CD4-positive, alpha-beta T cell (primary cell): ENCODE measurements at regions of chr1 and their contacts with region 1.

Region 1: GRCh38 chr1:156500797-156501499 is 373 bp upstream of the MEF2D start:
- DNase-seq: peak; percentile 90 to 97 (median 94)
- ATAC-seq: peak; percentile 63
- H3K4me3 ChIP-seq: peak overlapping the region; percentile 98
- H3K4me3 Mint-ChIP-seq: peak overlapping the region; percentile 97
- H3K27ac ChIP-seq: peak overlapping the region; percentile 96
- H3K27ac Mint-ChIP-seq: peak overlapping the region; percentile 97
- H3K4me1 ChIP-seq: peaks cover 84% of the 10 kb centered on the region
- H3K4me1 Mint-ChIP-seq: peaks cover 82% of the 10 kb centered on the region
- H3K27me3 ChIP-seq: no peaks in the 10 kb centered on the region
- H3K27me3 Mint-ChIP-seq: no peaks in the 10 kb centered on the region
- CTCF ChIP-seq: peak; percentile 74

Region 2: DNA sequence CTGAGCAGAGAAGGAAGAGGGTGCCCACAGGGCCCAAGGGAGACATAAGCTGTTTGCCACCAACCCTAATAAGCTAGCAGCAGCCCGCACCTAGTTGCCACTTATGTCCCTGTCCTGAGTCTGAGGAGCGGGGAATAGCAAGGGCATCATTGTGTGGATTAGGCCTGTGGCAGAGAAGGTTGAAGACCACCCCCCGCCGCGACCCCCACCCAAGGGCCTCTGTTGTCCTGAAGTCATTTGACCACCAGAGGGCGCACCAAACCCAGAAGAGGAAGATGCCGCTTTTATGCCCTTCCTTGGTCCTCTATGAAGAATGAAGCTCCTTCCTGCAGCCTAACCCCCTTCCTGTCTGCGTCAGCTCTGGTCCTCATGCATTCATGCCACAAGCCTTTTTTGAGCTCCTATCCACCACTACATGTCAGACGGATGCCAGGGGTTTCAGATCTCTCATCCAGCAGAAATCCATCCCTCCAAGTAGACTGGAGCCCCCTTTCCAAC is 115.4 kb before region 1 on chr1:
- CTCF ChIA-PET with region 1: interaction called, 7 read pairs
- POLR2A ChIA-PET with region 1: interaction called, 12 read pairs
- intact Hi-C with region 1: no loop called
- DNase-seq: peak; percentile 58 to 86 (median 74)
- ATAC-seq: peak; percentile 93
- H3K4me3 ChIP-seq: no peak overlapping the region
- H3K4me3 Mint-ChIP-seq: no peak overlapping the region
- H3K27ac ChIP-seq: no peak overlapping the region
- H3K27ac Mint-ChIP-seq: no peak overlapping the region
- H3K4me1 ChIP-seq: peaks cover 13% of the 10 kb centered on the region
- H3K4me1 Mint-ChIP-seq: peaks cover 12% of the 10 kb centered on the region
- H3K27me3 ChIP-seq: peaks cover 16 to 18% of the 10 kb centered on the region in 2 experiments
- H3K27me3 Mint-ChIP-seq: peaks cover 39% of the 10 kb centered on the region
- CTCF ChIP-seq: peak; percentile 90

Region 3: DNA sequence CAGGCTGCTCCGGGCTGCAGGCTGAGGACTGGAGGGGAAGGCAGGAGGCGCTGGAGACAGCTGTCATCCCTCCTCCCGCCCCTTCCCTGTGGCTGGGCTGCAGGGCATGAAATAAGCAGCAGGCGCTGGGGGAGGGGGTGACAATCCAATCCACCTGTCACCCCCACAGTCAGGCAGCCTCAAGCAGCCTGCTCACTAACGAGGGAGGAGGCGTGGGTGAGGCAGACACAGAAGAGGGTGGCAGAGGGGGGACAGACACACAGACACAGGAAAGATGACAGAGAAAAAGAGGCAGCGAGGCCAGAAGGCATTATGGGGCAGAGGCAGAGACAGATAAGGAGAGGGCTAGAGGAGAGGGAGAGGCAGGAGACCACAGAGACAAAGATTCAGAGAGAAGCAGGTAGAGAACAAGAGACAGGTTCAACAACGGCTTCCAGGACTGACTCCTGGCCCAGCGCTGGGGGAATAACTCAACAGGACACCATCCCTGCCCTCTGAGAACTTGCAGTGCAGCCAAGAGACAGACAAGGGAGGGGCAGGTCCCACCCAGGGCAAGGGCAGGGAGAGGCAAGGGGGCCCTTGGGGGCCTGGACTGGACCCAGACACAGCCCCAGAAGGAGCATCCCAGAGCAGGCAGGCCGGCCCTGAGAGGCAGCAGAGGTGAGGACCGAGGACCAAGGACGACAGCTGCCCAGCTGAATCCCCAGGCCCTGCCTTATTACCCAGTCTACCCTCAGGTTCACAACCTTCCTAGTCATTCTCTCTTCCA is 11.6 kb before region 1 on chr1:
- CTCF ChIA-PET with region 1: interaction called, 17 read pairs
- POLR2A ChIA-PET with region 1: interaction called, 145 read pairs
- intact Hi-C with region 1: no loop called
- DNase-seq: peak in 8 of 14 experiments; percentile 18 to 66 (median 50)
- ATAC-seq: peak; percentile 71
- H3K4me3 ChIP-seq: peak overlapping the region; percentile 11
- H3K4me3 Mint-ChIP-seq: peak overlapping the region; percentile 70
- H3K27ac ChIP-seq: peak overlapping the region; percentile 68 to 71
- H3K27ac Mint-ChIP-seq: peak overlapping the region; percentile 90
- H3K4me1 ChIP-seq: peaks cover 98% of the 10 kb centered on the region
- H3K4me1 Mint-ChIP-seq: peaks cover 90% of the 10 kb centered on the region
- H3K27me3 ChIP-seq: no peaks in the 10 kb centered on the region
- H3K27me3 Mint-ChIP-seq: no peaks in the 10 kb centered on the region
- CTCF ChIP-seq: no peak

Region 4: GRCh38 chr1:156571949-156572662 is 71.2 kb after region 1 on chr1 and contains the start of gene IQGAP3:
- CTCF ChIA-PET with region 1: no interaction called
- POLR2A ChIA-PET with region 1: interaction called, 15 read pairs
- intact Hi-C with region 1: no loop called
- DNase-seq: peak; percentile 47 to 87 (median 66)
- ATAC-seq: peak; percentile 95
- H3K4me3 ChIP-seq: peak within 1 kb of the TSS; percentile 44
- H3K4me3 Mint-ChIP-seq: peak within 1 kb of the TSS; percentile 82
- H3K27ac ChIP-seq: no peak within 1 kb of the TSS
- H3K27ac Mint-ChIP-seq: no peak within 1 kb of the TSS
- H3K4me1 ChIP-seq: peaks cover 12% of the 10 kb centered on the region
- H3K4me1 Mint-ChIP-seq: peaks cover 17% of the 10 kb centered on the region
- H3K27me3 ChIP-seq: peaks cover 21 to 30% of the 10 kb centered on the region in 2 experiments
- H3K27me3 Mint-ChIP-seq: peaks cover 38% of the 10 kb centered on the region
- CTCF ChIP-seq: no peak
- total RNA-seq, gene IQGAP3: not detected

Region 5: DNA sequence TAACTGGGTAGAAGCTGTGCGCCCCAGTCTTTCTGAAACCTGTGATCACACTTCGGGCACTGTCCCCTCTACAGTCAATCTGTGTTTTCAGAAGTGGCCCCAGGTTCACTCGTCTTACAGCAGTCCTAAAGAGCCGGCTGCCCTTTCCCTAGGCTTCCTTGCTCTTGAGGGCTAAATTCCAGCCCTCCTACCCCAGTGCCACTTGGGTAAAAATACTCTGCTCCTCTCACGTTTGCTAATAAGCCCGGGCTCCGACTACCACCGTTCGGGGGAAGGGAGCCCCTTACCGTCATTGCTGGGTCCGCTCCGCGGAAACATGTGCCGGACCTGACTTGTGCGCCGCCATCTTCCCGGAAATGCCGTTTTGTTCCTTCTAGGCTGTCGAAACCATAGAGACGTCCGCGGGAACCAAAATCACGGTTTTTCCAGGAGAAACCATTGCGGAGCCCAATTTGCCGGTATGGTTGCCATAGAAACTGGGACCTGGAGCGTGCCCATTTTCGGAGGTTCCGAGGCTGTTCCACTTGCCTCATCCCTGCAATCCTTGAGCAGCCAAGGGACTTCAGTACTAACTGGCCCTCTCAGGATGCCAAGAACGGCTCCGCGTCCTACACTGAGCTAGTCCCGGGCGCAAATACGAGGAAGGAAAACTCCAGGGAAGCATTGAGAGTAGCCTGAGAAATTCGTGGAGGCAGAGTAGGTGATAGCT is 100.3 kb after region 1 on chr1 and contains the start of gene GPATCH4:
- CTCF ChIA-PET with region 1: interaction called, 3 read pairs
- POLR2A ChIA-PET with region 1: interaction called, 12 read pairs
- intact Hi-C with region 1: no loop called
- DNase-seq: peak; percentile 53 to 88 (median 61)
- ATAC-seq: peak; percentile 78
- H3K4me3 ChIP-seq: peak within 1 kb of the TSS; percentile 78
- H3K4me3 Mint-ChIP-seq: peak within 1 kb of the TSS; percentile 92
- H3K27ac ChIP-seq: peak within 1 kb of the TSS; percentile 63 to 71
- H3K27ac Mint-ChIP-seq: peak within 1 kb of the TSS; percentile 73
- H3K4me1 ChIP-seq: peaks cover 32% of the 10 kb centered on the region
- H3K4me1 Mint-ChIP-seq: peaks cover 37% of the 10 kb centered on the region
- H3K27me3 ChIP-seq: no peaks in the 10 kb centered on the region
- H3K27me3 Mint-ChIP-seq: no peaks in the 10 kb centered on the region
- CTCF ChIP-seq: no peak
- total RNA-seq, gene GPATCH4: 35.3 to 36.3 TPM

Region 6: DNA sequence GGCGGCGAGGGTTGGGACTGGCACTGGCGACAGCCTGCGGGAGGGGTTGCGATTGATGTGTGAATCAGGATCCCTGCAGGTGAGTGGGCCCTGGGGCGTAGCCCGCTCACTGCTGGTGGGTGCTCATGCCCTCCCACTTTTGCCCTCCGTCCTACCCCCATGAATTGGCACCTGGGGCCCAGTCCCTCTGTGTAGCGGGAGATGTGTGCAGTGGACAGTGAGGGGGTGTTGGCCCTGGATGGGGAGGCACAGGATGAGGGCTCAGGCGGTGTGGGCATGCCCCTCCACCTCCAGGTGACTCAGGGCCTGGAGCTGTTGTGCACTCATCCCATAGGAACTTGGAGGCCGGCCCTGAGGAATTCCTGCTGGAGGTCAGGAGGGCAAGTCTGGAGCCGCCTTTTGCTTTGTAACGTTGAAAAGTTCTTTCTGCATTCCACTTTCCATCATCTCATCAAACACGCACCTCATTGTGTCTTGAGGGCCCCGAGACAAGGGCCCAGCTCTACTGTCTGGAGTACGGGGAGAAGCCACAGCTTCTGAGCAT is 395.6 kb after region 1 on chr1:
- CTCF ChIA-PET with region 1: no interaction called
- POLR2A ChIA-PET with region 1: no interaction called
- intact Hi-C with region 1: no loop called
- DNase-seq: no peak
- ATAC-seq: no peak
- H3K4me3 ChIP-seq: no peak overlapping the region
- H3K4me3 Mint-ChIP-seq: no peak overlapping the region
- H3K27ac ChIP-seq: no peak overlapping the region
- H3K27ac Mint-ChIP-seq: no peak overlapping the region
- H3K4me1 ChIP-seq: peaks cover 28% of the 10 kb centered on the region
- H3K4me1 Mint-ChIP-seq: peaks cover 19% of the 10 kb centered on the region
- H3K27me3 ChIP-seq: peaks cover 17 to 35% of the 10 kb centered on the region in 2 experiments
- H3K27me3 Mint-ChIP-seq: peaks cover 66% of the 10 kb centered on the region
- CTCF ChIP-seq: no peak

Region 7: DNA sequence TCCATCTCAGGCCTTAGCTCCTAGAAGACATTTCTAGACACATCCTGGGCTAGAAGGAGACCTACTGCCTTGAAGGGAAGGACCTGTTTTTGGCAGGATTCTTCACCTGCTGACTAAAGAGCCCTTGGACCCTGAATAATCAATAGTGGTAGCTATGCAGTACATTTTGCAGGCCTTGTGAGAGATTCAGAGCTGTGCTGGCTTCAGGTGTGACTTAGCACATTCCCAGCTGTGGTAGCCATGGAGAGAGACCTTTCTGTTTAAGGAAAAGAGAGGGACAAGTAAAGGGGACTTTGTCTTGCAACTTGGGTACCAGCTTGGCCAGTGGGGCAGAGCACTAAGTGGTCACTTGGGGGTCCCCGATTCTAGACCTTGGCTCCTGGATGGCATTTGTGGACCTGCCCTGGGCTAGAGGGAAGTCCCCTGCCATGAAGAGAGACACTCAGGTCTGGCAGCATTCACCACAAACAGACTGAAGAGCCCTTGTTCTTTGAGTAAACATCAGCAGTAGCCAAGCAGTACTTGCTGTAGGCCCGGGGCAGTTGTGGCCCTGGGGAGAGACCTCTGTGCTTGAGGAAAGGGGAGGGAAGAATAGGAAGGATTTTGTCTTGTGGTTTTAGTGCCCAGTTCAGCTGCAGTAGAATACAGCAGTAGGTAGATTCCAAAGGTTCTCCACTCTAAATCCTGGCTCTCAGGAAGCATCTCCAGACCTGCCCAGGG is 1727.1 kb after region 1 on chr1:
- CTCF ChIA-PET with region 1: no interaction called
- POLR2A ChIA-PET with region 1: no interaction called
- intact Hi-C with region 1: no loop called
- DNase-seq: no peak
- ATAC-seq: no peak
- H3K4me3 ChIP-seq: no peak overlapping the region
- H3K4me3 Mint-ChIP-seq: no peak overlapping the region
- H3K27ac ChIP-seq: no peak overlapping the region
- H3K27ac Mint-ChIP-seq: no peak overlapping the region
- H3K4me1 ChIP-seq: no peaks in the 10 kb centered on the region
- H3K4me1 Mint-ChIP-seq: no peaks in the 10 kb centered on the region
- H3K27me3 ChIP-seq: peaks cover 13 to 16% of the 10 kb centered on the region in 2 experiments
- H3K27me3 Mint-ChIP-seq: peaks cover 44% of the 10 kb centered on the region
- CTCF ChIP-seq: no peak